Activated CD4-positive, alpha-beta T cell treated with anti-CD3 and anti-CD28 coated beads, Interleukin-2, amount 10 ng/mL, durations not matched to agents 24 days and 14 days (primary cell): ENCODE measurements at regions of chr12 and their contacts with region 1.

Region 1: GRCh38 chr12:122895705-122896636 is at the start of gene VPS37B:
- DNase-seq: peak; percentile 97
- H3K4me3 Mint-ChIP-seq: peak within 1 kb of the TSS; percentile 94
- H3K27ac Mint-ChIP-seq: peak within 1 kb of the TSS; percentile 90
- H3K4me1 Mint-ChIP-seq: peaks cover 73% of the 10 kb centered on the region
- H3K27me3 Mint-ChIP-seq: peaks cover 6% of the 10 kb centered on the region
- total RNA-seq, gene VPS37B: 9.2 and 9.5 TPM in 2 replicates

Region 2: GRCh38 chr12:122946690-122947341 is 50.8 kb after region 1 on chr12:
- intact Hi-C with region 1: loop called (anchors 1 kb)
- DNase-seq: peak; percentile 93
- H3K4me3 Mint-ChIP-seq: peak overlapping the region; percentile 84
- H3K27ac Mint-ChIP-seq: peak overlapping the region; percentile 88
- H3K4me1 Mint-ChIP-seq: peaks cover 29% of the 10 kb centered on the region
- H3K27me3 Mint-ChIP-seq: peaks cover 2% of the 10 kb centered on the region